ENCODE measurements at regions of chr3 and their contacts with region 1.

Region 1: DNA sequence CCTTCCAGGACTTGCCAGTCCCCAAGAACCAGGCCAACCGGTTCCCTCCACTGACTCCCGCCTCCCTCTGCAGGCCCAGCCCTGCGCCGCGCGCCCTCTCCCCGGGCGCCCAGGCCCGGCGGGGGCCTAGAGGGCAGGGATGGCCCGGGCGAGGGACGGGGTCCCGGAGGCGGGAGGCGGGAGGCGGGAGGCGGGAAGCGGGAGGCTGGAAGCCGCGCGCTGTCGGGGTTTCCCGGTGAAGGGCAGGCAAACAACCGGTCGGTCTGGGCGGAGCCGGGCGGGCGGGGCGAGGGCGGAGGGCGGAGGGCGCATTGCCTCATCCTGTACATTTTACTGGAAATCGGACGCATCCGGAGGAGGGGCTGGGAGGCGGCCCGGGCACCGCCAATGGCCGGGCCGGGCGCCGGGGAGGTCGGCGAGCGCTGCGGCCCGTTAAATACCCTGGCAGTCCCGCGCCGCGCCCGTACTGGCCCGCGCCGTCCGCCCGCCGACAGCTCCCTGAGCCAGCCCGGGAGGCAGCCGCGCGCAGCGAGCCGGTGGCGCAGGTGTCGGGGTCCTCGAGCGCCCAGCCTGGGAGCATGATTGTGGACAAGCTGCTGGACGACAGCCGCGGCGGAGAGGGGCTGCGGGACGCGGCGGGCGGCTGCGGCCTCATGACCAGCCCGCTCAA is at the start of gene NFKBIZ:
- DNase-seq: no peak
- H3K4me3 ChIP-seq: peak within 1 kb of the TSS; percentile 79
- CTCF ChIP-seq: no peak

Region 2: GRCh38 chr3:101827211-101828174 is 21.7 kb before region 1 on chr3:
- CTCF ChIA-PET with region 1: no interaction called
- POLR2A ChIA-PET with region 1: interaction called, 67 read pairs
- DNase-seq: no peak
- H3K4me3 ChIP-seq: peak overlapping the region; percentile 61
- CTCF ChIP-seq: no peak

Region 3: GRCh38 chr3:101861212-101861788 is 12.1 kb after region 1 on chr3:
- CTCF ChIA-PET with region 1: interaction called, 3 read pairs
- POLR2A ChIA-PET with region 1: interaction called, 26 read pairs
- DNase-seq: no peak
- H3K4me3 ChIP-seq: no peak overlapping the region
- CTCF ChIP-seq: no peak

Region 4: DNA sequence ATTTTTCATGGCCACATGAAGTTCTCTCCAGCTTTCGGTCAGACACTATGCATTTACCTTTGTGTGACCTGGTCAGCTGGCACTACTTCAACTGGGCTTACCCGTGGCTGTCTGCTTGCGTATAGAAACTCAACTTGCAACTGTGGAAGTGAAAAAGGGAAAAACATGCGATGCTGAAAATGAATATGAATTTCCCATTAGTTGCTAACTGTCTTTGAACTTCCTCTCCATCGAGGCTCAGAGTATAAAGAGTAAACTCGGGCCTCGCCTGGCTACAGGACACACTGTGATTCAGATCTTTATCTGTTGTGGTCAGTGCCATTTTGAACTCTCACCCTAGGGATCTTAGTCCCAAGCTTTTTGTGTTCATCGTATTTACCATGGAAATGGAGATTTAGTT is 27.0 kb after region 1 on chr3:
- CTCF ChIA-PET with region 1: no interaction called
- POLR2A ChIA-PET with region 1: no interaction called
- DNase-seq: no peak
- H3K4me3 ChIP-seq: no peak overlapping the region
- CTCF ChIP-seq: no peak

Region 5: DNA sequence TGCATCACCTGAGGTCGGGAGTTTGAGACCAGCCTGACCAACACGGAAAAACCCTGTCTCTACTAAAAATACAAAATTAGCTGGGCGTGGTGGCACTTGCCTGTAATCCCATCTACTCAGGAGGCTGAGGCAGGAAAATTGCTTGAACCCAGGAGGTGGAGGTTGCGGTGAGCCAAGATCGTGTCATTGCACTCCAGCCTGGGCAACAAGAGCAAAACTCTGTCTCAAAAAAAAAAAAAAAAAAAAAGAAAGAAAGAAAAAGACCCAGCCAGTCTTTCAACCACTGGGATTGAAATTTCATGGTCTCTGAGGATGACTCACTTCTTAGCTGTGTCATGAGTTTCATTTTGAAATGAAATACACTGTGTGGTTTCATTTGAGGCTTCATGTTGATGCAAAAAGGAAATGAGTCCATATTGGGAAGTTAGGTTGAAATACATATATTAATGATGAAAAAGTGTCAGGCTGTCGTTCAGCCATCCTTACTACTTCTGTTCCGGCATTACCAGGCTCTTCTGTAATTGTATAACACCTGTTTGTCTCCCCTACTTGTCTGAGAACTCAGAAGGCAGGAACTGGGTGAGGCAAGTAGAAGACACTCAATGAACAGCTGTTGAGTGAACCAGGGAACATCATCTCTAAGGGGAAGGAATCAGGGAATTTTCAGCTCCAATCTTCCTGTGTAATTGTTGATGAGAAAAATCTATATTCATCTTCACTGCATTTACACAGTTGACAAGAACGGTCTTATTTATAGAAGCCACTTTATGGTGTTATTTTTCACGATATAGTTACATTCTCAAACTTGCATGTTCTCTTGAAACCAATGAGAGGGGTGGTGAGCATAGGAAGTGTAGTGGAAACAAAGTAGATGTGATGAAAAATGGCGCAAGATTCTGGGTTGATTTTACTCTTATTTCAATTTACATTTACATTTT is 87.5 kb after region 1 on chr3:
- CTCF ChIA-PET with region 1: no interaction called
- POLR2A ChIA-PET with region 1: interaction called, 20 read pairs
- DNase-seq: peak; percentile 69
- H3K4me3 ChIP-seq: no peak overlapping the region
- CTCF ChIP-seq: no peak

Region 6: DNA sequence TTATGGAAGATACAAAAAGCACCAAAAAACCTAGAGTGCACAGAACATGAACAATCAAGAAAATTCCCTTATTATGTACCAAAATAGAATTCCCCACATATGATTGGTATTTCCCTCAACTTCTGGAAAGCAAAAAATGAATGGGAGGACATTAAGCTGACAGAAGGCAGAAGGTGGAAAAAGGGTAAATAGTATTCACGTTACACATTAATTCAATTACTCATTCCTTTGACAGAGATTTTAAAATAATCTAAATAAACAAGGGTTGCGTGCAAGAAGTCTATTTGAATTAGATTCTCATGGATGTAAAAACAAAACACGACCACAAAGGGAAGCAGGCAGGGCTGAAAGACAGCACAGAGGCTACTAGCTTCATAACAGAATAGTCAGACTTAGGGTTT is 325.1 kb after region 1 on chr3:
- CTCF ChIA-PET with region 1: no interaction called
- POLR2A ChIA-PET with region 1: interaction called, 29 read pairs
- DNase-seq: no peak
- H3K4me3 ChIP-seq: no peak overlapping the region
- CTCF ChIP-seq: no peak

Region 7: GRCh38 chr3:102206511-102207031 is 357.4 kb after region 1 on chr3:
- CTCF ChIA-PET with region 1: no interaction called
- POLR2A ChIA-PET with region 1: interaction called, 18 read pairs
- DNase-seq: peak; percentile 71
- H3K4me3 ChIP-seq: 0 out of 2 replicates have a peak overlapping the region, but pooled peaks have one; percentile 4
- CTCF ChIP-seq: no peak